ENCODE measurements at regions of chr14 and their contacts with region 1.

Region 1: DNA sequence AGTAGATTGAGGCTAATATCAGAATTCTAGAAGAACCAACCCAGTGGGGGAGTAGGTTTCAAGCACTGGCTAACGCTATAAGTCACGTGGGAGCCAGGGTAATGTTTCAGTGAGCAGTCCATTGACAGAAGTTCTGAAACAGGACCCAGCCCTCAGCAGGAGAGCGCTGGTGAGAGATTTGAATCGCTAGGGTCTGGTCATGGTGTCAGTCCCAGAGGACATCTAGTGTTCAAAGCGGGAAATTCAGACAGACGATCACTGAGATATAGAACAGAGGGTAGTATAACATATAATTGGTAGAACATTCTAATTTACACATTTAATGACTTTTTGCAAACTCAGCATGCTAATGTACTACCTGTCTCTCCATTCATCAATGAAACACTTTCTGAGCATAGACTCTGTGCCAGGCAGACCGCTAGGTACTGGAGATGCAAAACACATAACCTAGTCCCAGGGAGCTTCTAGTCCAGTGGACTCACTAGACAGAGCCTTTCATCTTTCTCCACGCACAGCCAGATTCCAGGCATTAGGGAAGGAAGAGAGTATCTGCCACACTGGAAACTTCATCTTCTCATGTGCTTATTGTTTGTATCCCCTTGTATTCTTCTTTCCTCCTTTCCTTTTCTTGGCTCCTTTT is 35.4 kb upstream of the RNASE3 start:
- DNase-seq: no peak
- H3K4me3 ChIP-seq: no peak overlapping the region
- H3K27ac ChIP-seq: no peak overlapping the region
- H3K4me1 ChIP-seq: no peaks in the 10 kb centered on the region
- H3K27me3 ChIP-seq: no peaks in the 10 kb centered on the region
- CTCF ChIP-seq: peak; percentile 64 to 70 (median 66)

Region 2: DNA sequence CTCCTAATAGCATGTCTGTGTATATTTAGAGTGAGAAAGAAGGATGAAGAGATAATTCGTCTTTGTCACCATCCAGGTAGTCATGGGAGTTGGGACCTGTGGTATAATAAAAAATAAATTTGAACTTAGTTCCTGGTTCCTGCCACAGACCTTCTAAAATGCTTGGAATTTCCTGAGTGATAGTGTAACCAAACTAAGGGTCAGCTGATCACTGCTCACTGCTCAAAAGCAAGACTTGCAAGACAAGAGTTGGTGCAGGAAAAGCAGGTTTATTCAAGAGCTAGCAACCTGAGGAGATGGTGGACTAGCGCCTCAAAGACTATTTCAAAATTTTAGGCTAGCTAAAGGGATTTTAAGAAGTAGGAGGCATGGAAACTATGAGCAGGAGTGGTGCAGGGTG is 148.2 kb before region 1 on chr14:
- dilution Hi-C with region 1: loop called (anchors 10 kb)
- DNase-seq: no peak
- H3K4me3 ChIP-seq: no peak overlapping the region
- H3K27ac ChIP-seq: no peak overlapping the region
- H3K4me1 ChIP-seq: no peaks in the 10 kb centered on the region
- H3K27me3 ChIP-seq: no peaks in the 10 kb centered on the region
- CTCF ChIP-seq: no peak

Measured in keratinocyte (primary cell).